ENCODE measurements at regions of chr2 and their contacts with region 1.

Region 1: DNA sequence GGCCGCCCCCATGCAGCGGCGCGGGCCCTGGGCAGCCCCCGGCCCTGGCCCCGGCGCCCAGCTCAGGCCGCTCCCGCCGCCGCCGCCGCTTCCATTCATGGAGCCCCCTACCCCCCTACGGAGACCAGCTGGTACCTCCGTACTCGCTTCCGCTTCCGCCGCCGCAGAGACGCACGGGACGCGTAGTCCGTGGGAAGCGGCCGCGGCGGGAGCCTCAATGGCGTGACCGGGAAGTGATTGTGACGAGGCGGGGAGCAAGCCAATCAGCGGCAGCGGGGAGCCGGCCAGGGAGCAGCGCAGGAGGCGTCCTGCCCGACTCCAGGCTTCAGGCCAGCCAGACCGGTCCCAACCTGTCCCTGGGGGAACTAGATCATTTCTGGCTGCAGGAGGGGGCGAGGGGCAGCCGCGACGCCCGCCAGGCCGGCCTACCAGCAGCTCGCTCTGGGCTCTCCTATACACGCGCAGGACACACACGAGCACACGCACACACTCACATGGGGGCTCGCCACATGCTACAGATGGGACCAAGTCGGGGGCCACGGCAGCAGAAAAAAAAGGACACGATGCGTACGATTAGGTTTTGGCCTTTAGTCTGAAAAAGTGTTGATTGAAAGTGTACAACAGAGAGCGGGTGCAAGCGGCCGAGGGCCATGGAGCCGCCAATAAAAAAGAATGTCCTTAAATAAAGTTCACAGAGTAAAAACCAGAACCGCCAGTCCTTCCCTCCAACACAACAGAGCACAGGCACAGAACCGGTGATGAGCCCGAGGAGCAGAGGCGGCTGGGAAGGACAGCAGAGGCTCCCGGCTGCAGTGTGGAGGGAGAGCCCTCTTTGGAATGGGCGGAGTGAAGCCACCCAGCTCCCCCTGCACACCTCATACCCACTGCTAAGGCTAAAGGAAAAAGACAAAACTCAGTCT is at the start of gene ZNF513:
- DNase-seq: peak; percentile 95
- ATAC-seq: peak; percentile 91
- H3K4me3 Mint-ChIP-seq: peak within 1 kb of the TSS; percentile 89
- H3K27ac Mint-ChIP-seq: peak within 1 kb of the TSS; percentile 96
- H3K4me1 Mint-ChIP-seq: peaks cover 29% of the 10 kb centered on the region
- H3K27me3 Mint-ChIP-seq: no peaks in the 10 kb centered on the region
- total RNA-seq, gene ZNF513: 7.7 to 10.5 TPM

Region 2: GRCh38 chr2:27014771-27015433 is 366.0 kb before region 1 on chr2:
- CTCF ChIA-PET with region 1: no interaction called
- POLR2A ChIA-PET with region 1: no interaction called
- intact Hi-C with region 1: no loop called
- DNase-seq: no peak
- ATAC-seq: no peak
- H3K4me3 Mint-ChIP-seq: no peak overlapping the region
- H3K27ac Mint-ChIP-seq: no peak overlapping the region
- H3K4me1 Mint-ChIP-seq: no peaks in the 10 kb centered on the region
- H3K27me3 Mint-ChIP-seq: no peaks in the 10 kb centered on the region

Region 3: GRCh38 chr2:27322766-27323595 is 57.9 kb before region 1 on chr2 and contains the start of gene MPV17:
- CTCF ChIA-PET with region 1: no interaction called
- POLR2A ChIA-PET with region 1: no interaction called
- intact Hi-C with region 1: loop called in 1 of 2 experiments (anchors 1 kb)
- DNase-seq: peak; percentile 94
- ATAC-seq: peak; percentile 99
- H3K4me3 Mint-ChIP-seq: peak within 1 kb of the TSS; percentile 98
- H3K27ac Mint-ChIP-seq: peak within 1 kb of the TSS; percentile 98
- H3K4me1 Mint-ChIP-seq: peaks cover 17% of the 10 kb centered on the region
- H3K27me3 Mint-ChIP-seq: no peaks in the 10 kb centered on the region
- total RNA-seq, gene MPV17: 93.4 to 103 TPM

Region 4: GRCh38 chr2:27628767-27629709 is 248.2 kb after region 1 on chr2 and contains the starts of genes CCDC121 and GPN1:
- CTCF ChIA-PET with region 1: no interaction called
- POLR2A ChIA-PET with region 1: no interaction called
- intact Hi-C with region 1: loop called in 1 of 2 experiments (anchors 1 kb)
- DNase-seq: peak; percentile 98
- ATAC-seq: peak; percentile 96
- H3K4me3 Mint-ChIP-seq: no peak within 1 kb of the TSS
- H3K27ac Mint-ChIP-seq: no peak within 1 kb of the TSS
- H3K4me1 Mint-ChIP-seq: peaks cover 37% of the 10 kb centered on the region
- H3K27me3 Mint-ChIP-seq: no peaks in the 10 kb centered on the region
- total RNA-seq, gene CCDC121: 0.11 to 0.44 TPM
- total RNA-seq, gene GPN1: 45.6 to 63.9 TPM

Region 5: GRCh38 chr2:27663463-27664249 is 282.8 kb after region 1 on chr2 and contains the starts of genes SLC4A1AP and SUPT7L:
- CTCF ChIA-PET with region 1: no interaction called
- POLR2A ChIA-PET with region 1: no interaction called
- intact Hi-C with region 1: loop called (anchors 1 to 2 kb)
- DNase-seq: peak; percentile 80
- ATAC-seq: peak; percentile 81
- H3K4me3 Mint-ChIP-seq: peak within 1 kb of the TSS; percentile 98
- H3K27ac Mint-ChIP-seq: peak within 1 kb of the TSS; percentile 100
- H3K4me1 Mint-ChIP-seq: peaks cover 42% of the 10 kb centered on the region
- H3K27me3 Mint-ChIP-seq: no peaks in the 10 kb centered on the region
- total RNA-seq, gene SLC4A1AP: 23.8 to 25.3 TPM
- total RNA-seq, gene SUPT7L: 23.7 to 26.1 TPM